ENCODE measurements at regions of chr9 and their contacts with region 1.

Region 1: GRCh38 chr9:19102631-19103345 is at the start of gene HAUS6:
- DNase-seq: peak; percentile 94 to 97 (median 96)
- H3K4me3 ChIP-seq: peak within 1 kb of the TSS; percentile 89
- H3K27ac ChIP-seq: peak within 1 kb of the TSS in 1 of 2 donors; percentile 75
- H3K4me1 ChIP-seq: peaks cover 3% of the 10 kb centered on the region
- H3K27me3 ChIP-seq: no peaks in the 10 kb centered on the region
- CTCF ChIP-seq: peak; percentile 27 to 81 (median 80)
- EP300 ChIP-seq: no peak
- POLR2A ChIP-seq: peak; percentile 90
- total RNA-seq, gene HAUS6: 7.1 to 13.1 (median 10.7) TPM

Region 2: DNA sequence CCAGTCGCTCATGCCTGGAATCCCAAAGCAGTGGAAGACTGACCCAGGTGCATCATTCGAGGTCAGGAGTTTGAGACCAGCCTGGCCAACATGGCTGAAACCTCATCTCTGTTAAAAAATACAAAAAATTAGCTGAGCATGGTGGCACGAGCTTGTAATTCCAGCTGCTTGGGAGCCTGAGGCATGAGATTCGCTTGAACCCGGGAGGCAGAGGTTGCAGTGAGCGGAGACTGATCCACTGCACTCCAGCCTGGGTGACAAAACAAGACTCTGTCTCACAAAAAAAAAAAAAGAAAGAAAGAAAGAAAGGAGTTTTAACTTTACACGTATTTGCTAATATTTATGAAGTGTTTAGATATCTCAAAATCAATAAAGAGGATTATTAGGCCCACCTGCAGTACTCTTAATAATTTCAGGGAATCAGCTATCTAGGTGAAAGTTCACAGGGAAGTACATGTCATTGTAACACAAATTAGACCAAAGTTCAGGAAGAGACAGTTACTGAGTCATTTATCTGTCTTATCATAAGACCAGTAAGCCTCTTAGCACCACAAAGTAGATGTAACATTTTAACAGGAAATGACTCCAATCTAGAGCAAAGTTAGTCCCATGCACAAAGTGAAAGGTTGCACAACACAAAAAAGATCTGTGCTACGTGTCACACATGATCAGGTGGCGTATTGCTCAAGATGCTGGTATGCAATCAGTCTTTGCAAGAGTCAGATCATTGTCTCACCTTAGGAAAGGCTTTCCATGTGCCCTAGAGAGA is 58.7 kb after region 1 on chr9:
- intact Hi-C with region 1: loop called in 1 of 4 experiments (anchors 10 kb)
- DNase-seq: peak in 2 of 5 donors; percentile 22 to 57
- H3K4me3 ChIP-seq: no peak overlapping the region
- H3K27ac ChIP-seq: no peak overlapping the region
- H3K4me1 ChIP-seq: no peaks in the 10 kb centered on the region
- H3K27me3 ChIP-seq: no peaks in the 10 kb centered on the region
- CTCF ChIP-seq: no peak
- EP300 ChIP-seq: peak; percentile 97
- POLR2A ChIP-seq: no peak

Region 3: DNA sequence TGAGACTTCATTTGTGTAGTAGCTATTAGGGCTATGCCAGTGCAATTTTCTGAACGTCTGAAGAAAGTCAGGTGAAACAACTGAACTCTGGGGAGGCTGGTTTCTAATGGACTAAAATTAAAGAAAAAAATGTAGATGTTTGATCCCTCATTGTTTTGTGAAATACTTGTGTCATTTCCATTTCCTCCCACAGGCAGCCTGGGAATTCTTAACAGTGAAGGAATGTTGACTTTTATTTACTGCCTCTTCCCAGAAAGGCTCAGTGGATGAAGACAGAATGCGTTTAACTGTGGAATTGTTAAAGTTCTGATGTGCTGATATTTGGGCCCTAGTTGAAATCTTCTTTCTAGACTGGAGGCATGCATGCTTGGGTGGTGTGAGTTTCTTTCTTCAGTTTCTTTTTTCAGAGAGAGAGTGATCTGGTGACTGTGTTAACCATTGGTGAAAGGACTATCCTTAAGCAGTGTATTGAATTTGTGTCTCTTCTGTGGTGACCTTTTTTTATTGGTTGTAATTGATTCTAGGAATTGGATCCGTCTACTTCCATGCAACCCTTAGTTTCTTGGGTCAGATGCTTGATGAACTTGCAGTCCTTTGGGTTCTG is 321.5 kb after region 1 on chr9:
- intact Hi-C with region 1: no loop called
- DNase-seq: no peak
- H3K4me3 ChIP-seq: no peak overlapping the region
- H3K27ac ChIP-seq: no peak overlapping the region
- H3K4me1 ChIP-seq: no peaks in the 10 kb centered on the region
- H3K27me3 ChIP-seq: no peaks in the 10 kb centered on the region
- CTCF ChIP-seq: no peak
- EP300 ChIP-seq: no peak
- POLR2A ChIP-seq: no peak

Region 4: DNA sequence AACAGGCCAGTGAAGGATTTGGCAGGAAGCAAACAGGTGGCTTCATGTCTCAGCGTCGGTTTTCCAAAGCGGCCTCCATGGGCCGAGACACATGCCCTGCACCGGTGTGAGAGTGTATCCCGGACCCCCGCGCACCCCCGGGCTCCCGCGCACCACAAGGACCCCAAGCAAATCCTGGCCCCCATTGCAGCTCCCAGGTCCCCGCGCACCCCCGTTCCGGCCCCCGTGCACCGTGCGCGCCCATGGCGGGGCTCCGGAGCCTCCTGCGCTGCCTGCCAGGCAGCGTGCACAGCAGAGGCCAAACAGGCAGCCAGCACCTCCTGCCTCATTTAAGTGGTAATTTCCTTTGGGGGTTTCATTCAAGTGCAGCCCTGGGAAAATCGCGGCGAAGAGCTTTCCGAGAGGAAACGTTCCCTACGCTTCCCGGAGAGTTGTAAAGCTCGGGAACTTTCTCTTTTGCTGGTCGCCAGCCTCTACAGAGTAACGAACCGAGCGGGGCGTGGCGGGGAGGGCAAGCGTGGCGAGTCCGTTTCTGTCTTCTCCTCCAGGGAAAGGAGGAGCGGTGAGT is 831.6 kb after region 1 on chr9:
- intact Hi-C with region 1: no loop called
- DNase-seq: peak in 3 of 5 donors; percentile 19 to 43 (median 35)
- H3K4me3 ChIP-seq: peak overlapping the region; percentile 39
- H3K27ac ChIP-seq: no peak overlapping the region
- H3K4me1 ChIP-seq: peaks cover 3% of the 10 kb centered on the region
- H3K27me3 ChIP-seq: no peaks in the 10 kb centered on the region
- CTCF ChIP-seq: no peak
- EP300 ChIP-seq: no peak
- POLR2A ChIP-seq: no peak